ENCODE measurements at regions of chr12 and their contacts with region 1.

Region 1: GRCh38 chr12:121550974-121551634 is 29.7 kb downstream of the KDM2B start:
- DNase-seq: no peak
- ATAC-seq: no peak
- H3K4me3 ChIP-seq: no peak overlapping the region
- H3K4me3 Mint-ChIP-seq: no peak overlapping the region
- H3K27ac ChIP-seq: no peak overlapping the region
- H3K27ac Mint-ChIP-seq: no peak overlapping the region
- H3K4me1 ChIP-seq: peaks cover 0 to 3% of the 10 kb centered on the region in 2 donors
- H3K4me1 Mint-ChIP-seq: peaks cover 2% of the 10 kb centered on the region
- H3K27me3 ChIP-seq: no peaks in the 10 kb centered on the region
- H3K27me3 Mint-ChIP-seq: no peaks in the 10 kb centered on the region
- CTCF ChIP-seq: no peak

Region 2: DNA sequence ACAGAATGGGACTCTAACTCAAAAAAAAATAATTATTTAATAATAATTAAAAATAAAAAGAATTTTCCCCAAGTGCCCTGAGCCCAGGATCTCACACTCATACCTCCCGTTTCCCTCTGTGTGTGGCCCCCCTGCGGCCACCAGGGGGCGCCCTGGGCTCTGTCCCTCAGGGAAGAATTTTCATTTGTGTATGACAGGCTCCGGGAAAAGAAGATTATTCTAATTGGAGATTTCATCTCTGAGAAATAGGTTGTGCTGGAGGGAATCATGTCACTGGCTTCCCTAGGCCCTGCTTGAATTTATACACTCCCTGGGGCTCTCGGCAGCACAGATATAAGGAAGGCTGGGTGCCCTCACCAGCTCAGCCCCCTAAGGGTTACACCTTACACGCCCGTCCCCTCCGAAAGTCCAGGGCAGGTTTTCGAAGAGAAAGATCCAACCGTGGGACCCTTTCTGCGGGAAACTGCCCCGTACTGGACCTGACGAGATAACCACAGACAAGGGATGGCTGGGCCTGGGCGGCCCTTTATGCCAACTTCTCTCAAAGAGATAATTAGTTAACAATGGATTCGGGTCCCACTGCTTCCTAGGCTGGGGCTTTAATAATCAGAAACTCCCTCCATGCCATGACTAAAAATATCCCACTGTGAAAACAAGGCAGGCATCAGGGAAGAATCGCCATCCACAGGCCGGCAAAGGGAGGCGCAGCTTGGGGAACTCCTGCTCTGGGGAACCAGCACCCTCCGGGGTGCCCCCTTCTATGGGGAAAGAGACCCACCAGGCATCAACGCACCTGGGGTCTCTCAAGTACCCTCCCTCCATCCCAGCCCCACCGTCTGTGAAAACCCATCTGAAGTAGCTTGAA is 50.9 kb before region 1 on chr12:
- CTCF ChIA-PET with region 1: interaction called, 44 read pairs
- POLR2A ChIA-PET with region 1: no interaction called
- intact Hi-C with region 1: loop called (anchors 1 kb)
- DNase-seq: peak; percentile 82
- ATAC-seq: peak; percentile 91
- H3K4me3 ChIP-seq: no peak overlapping the region
- H3K4me3 Mint-ChIP-seq: no peak overlapping the region
- H3K27ac ChIP-seq: no peak overlapping the region
- H3K27ac Mint-ChIP-seq: no peak overlapping the region
- H3K4me1 ChIP-seq: peaks cover 10 to 19% of the 10 kb centered on the region in 2 donors
- H3K4me1 Mint-ChIP-seq: peaks cover 16% of the 10 kb centered on the region
- H3K27me3 ChIP-seq: no peaks in the 10 kb centered on the region
- H3K27me3 Mint-ChIP-seq: no peaks in the 10 kb centered on the region
- CTCF ChIP-seq: peak; percentile 99

Region 3: DNA sequence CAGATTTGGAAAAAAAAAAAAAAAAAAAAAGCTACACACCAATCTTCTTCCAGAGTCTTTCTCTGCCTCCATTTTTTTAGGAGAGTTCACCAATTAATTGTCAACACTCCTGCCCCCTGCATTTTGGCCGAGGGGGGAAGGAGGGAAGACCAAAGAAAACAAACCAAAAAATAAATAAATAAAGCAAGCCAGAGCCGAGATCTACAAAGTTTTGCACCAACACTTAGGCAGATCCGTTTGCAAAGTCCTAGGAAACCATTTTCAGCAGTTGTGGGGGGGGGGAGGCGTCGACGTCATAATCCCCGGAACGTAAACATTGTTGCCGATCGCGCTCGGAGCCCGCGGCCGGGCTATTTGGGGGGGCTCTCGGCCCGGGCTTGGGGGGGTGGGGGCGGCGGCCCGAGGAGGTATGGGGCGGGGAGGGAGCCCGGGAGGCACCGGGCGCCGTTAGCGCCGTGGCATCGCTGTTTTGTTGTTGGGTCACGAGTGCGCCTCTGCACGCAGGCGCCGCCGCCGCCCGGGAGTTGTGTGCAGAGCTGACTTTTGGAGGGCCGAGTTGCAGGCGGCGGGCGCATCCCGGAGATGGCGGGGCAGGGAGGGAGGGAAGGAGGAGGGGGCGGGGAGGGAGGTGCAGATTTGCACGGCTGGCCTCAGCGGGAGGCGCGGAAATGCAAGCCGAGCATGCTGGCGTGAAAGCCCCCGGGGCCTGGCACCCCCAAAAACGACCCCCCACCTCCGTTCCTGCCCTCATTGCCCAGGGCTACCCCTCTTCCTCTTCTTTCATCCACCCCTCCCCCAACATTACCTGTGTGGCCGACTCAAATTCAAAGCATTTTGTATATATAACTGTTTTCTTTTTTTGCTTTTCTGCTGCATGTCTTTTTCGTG is 29.1 kb after region 1 on chr12:
- CTCF ChIA-PET with region 1: interaction called, 42 read pairs
- POLR2A ChIA-PET with region 1: no interaction called
- intact Hi-C with region 1: no loop called
- DNase-seq: peak; percentile 79
- ATAC-seq: peak; percentile 55
- H3K4me3 ChIP-seq: peak overlapping the region; percentile 57 to 93 (median 65)
- H3K4me3 Mint-ChIP-seq: peak overlapping the region; percentile 94
- H3K27ac ChIP-seq: peak overlapping the region; percentile 69 to 77
- H3K27ac Mint-ChIP-seq: peak overlapping the region; percentile 94
- H3K4me1 ChIP-seq: peaks cover 23 to 47% of the 10 kb centered on the region in 2 donors
- H3K4me1 Mint-ChIP-seq: peaks cover 34% of the 10 kb centered on the region
- H3K27me3 ChIP-seq: no peaks in the 10 kb centered on the region
- H3K27me3 Mint-ChIP-seq: no peaks in the 10 kb centered on the region
- CTCF ChIP-seq: no peak

Region 4: DNA sequence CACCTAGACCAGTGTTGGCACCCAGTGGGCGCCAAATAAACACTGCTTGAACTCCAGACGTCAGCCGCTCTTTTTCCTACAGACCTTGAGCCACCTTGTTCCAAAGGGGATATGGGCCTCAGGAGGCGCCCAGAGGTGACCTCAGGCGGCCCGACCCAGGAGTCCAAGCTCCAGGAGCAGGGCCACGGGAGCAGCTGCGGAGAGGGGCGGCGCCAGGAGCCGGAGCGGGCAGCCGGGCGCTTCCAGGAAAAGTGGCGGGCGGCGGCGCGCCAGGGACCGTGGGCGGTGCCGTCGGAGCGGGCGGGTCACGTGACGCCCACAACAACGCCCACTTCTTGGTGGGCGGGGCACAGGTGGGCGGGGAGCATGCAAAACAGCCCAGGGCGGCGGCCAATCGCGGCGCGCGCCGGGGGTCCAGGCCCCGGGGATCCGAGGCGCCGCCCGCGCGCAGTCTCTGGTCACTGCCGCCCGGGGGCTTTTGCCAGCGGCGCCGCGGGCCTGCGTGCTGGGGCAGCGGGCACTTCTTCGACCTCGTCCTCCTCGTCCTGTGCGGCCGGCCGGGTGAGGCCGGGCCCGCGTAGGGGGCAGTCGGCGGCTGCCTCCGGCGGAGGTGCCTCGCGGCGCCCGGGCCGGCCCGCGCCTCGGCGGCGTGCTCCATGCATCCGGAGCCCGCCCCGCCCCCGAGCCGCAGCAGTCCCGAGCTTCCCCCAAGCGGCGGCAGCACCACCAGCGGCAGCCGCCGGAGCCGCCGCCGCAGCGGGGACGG is 75.2 kb after region 1 on chr12 and contains the start of gene ORAI1:
- CTCF ChIA-PET with region 1: interaction called, 213 read pairs
- POLR2A ChIA-PET with region 1: interaction called, 10 read pairs
- intact Hi-C with region 1: loop called (anchors 1 kb)
- DNase-seq: peak; percentile 97
- ATAC-seq: peak; percentile 76
- H3K4me3 ChIP-seq: peak within 1 kb of the TSS; percentile 61 to 93 (median 82)
- H3K4me3 Mint-ChIP-seq: peak within 1 kb of the TSS; percentile 96
- H3K27ac ChIP-seq: peak within 1 kb of the TSS; percentile 87 to 91
- H3K27ac Mint-ChIP-seq: peak within 1 kb of the TSS; percentile 96
- H3K4me1 ChIP-seq: peaks cover 40 to 50% of the 10 kb centered on the region in 2 donors
- H3K4me1 Mint-ChIP-seq: peaks cover 48% of the 10 kb centered on the region
- H3K27me3 ChIP-seq: no peaks in the 10 kb centered on the region
- H3K27me3 Mint-ChIP-seq: no peaks in the 10 kb centered on the region
- CTCF ChIP-seq: no peak
- total RNA-seq, gene ORAI1: 43.2 and 44.2 TPM in 2 replicates

Region 5: DNA sequence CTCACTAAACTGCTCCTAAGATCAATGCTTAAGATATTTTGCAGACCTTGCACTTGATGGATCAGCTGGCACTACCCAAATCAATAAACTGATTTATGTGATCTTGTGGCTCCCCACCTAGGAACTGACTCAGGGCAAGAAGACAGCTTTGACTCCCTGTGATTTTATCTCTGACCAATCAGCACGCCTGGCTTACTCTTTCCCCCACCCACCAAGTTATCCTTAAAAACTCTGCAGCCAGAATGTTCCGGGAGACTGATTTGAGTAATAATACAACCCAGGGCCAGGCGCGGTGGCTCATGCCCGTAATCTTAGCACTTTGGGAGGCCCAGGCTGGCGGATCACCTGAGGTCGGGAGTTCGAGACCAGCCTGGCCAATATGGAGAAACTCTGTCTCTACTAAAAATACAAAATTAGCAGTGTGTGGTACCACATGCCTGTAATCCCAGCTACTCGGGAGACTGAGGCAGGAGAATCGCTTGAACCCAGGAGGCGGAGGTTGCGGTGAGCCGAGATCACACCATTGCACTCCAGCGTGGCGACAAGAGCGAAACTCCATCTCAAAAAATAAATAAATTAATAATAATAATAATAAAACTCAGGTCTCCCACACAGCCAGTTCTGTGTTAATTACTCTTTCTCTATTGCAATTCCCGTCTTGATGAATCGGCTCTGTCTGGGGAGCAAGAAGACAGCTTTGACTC is 106.4 kb after region 1 on chr12:
- CTCF ChIA-PET with region 1: interaction called, 15 read pairs
- POLR2A ChIA-PET with region 1: no interaction called
- intact Hi-C with region 1: no loop called
- DNase-seq: no peak
- ATAC-seq: no peak
- H3K4me3 ChIP-seq: no peak overlapping the region
- H3K4me3 Mint-ChIP-seq: peak overlapping the region; percentile 73
- H3K27ac ChIP-seq: no peak overlapping the region
- H3K27ac Mint-ChIP-seq: peak overlapping the region; percentile 76
- H3K4me1 ChIP-seq: peaks cover 16 to 19% of the 10 kb centered on the region in 2 donors
- H3K4me1 Mint-ChIP-seq: peaks cover 28% of the 10 kb centered on the region
- H3K27me3 ChIP-seq: no peaks in the 10 kb centered on the region
- H3K27me3 Mint-ChIP-seq: no peaks in the 10 kb centered on the region
- CTCF ChIP-seq: no peak

Region 6: DNA sequence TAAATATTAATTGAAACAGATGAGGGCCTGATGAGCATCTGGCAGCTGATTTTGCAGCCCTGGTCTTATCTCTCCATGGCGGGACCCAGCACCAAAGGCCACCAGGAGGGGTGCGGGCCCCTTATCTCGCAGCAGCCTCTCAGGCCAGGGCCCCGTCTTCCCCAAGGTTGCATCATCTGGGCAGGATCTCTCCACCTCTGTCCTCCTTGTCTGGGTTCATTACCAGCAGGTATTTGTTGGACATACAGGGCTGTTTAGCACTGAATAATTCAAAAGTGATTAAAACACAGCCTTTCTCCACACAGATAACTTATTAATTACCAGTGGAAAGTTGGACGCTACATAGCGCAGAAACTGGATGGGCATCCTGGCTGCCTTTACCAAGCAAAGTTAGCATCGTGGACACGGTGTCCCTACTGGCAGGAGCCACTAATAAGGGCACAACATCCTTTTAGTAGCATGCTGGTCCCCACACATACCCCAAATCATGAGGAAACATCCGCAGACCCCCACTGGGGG is 187.3 kb after region 1 on chr12:
- CTCF ChIA-PET with region 1: no interaction called
- POLR2A ChIA-PET with region 1: no interaction called
- intact Hi-C with region 1: no loop called
- DNase-seq: no peak
- ATAC-seq: no peak
- H3K4me3 ChIP-seq: no peak overlapping the region
- H3K4me3 Mint-ChIP-seq: no peak overlapping the region
- H3K27ac ChIP-seq: no peak overlapping the region
- H3K27ac Mint-ChIP-seq: no peak overlapping the region
- H3K4me1 ChIP-seq: no peaks in the 10 kb centered on the region
- H3K4me1 Mint-ChIP-seq: no peaks in the 10 kb centered on the region
- H3K27me3 ChIP-seq: no peaks in the 10 kb centered on the region
- H3K27me3 Mint-ChIP-seq: no peaks in the 10 kb centered on the region
- CTCF ChIP-seq: no peak

Region 7: GRCh38 chr12:121773011-121773777 is 222.1 kb after region 1 on chr12:
- CTCF ChIA-PET with region 1: interaction called, 13 read pairs
- POLR2A ChIA-PET with region 1: no interaction called
- intact Hi-C with region 1: no loop called
- DNase-seq: peak; percentile 87
- ATAC-seq: peak; percentile 96
- H3K4me3 ChIP-seq: no peak overlapping the region
- H3K4me3 Mint-ChIP-seq: no peak overlapping the region
- H3K27ac ChIP-seq: no peak overlapping the region
- H3K27ac Mint-ChIP-seq: peak overlapping the region; percentile 82
- H3K4me1 ChIP-seq: peaks cover 15 to 25% of the 10 kb centered on the region in 2 donors
- H3K4me1 Mint-ChIP-seq: peaks cover 16% of the 10 kb centered on the region
- H3K27me3 ChIP-seq: no peaks in the 10 kb centered on the region
- H3K27me3 Mint-ChIP-seq: no peaks in the 10 kb centered on the region
- CTCF ChIP-seq: peak; percentile 87

Measured in B cell (primary cell).